ENCODE measurements at regions of chr18 and their contacts with region 1.

Region 1: DNA sequence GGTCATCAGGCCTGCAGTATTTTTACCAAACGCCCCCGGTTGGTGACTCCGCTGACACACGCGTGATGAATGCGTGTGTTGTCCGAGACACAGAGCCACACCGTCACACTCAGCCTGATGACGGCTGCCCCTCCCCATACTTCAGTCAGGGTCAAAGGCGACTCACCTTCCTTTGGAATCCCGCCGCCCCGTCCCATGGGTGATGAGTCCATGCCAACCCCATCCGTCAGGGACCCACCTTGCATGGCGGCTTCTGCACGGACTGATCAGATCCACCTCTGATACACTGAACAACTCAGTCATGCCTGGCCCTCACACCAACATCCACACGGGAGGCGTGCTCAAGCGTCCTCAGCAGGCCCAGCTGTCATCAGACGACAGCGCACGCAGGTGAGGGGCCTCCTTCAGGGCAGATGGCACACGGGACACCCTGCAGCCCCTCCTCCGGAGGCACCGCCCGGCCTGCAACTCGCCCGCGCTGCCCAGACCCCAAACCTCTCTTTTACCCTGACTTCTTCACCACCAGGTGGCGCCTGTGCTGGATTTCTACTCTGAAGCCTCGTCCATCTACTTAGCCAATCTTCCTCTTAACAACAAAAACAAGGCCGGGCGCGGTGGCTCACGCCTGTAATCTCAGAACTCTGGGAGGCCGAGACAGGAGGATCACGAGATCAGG is 89.2 kb downstream of the ZNF516 start:
- DNase-seq: no peak

Region 2: GRCh38 chr18:76064998-76065397 is 340.8 kb before region 1 on chr18:
- intact Hi-C with region 1: no loop called
- DNase-seq: no peak

Region 3: DNA sequence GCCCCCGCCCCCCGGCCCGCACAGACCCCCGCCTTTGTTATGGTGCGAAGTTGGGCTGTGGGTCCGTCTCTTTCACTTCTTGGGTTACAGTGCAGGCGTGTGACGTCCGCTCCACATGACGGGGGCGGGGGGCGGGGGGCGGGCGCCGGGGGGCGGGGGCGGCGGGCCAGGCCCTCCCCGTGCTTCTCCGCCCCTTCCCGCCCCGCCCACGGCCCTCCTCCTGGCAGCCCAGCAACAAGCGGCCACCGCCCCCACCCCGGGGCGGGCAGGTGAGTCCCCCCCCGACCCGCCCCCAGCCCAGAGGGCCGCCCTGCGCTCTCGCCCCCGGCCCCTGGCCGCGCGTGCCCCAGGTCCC is 85.6 kb after region 1 on chr18:
- intact Hi-C with region 1: loop called (anchors 5 kb)
- DNase-seq: peak; percentile 92

Region 4: GRCh38 chr18:76699923-76700322 is 294.1 kb after region 1 on chr18:
- intact Hi-C with region 1: no loop called
- DNase-seq: no peak

Region 5: DNA sequence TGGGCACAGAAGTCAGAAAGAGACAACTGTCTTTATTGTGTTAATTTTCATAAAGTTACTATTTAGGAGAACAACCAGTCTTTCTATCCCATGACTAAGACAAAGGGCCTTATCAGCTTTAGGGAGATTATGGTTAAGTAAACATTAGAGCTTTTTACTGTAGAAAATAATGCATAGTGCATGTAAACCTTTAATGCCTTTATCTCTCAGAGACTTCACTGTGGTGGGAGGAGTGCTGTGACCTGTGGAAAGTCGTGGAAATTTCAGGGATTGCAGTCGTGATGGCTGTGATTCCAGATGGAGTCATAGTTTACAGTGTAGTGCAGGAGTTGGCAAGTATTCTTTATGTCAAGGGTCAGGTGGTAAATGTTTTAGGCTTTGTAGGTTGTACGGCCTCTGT is 432.4 kb after region 1 on chr18:
- intact Hi-C with region 1: no loop called
- DNase-seq: no peak

Measured in cardiac septum (tissue), 1 donor.